A673 (cell line): ENCODE measurements at regions of chr1 and their contacts with region 1.

Region 1: GRCh38 chr1:113140588-113141446 is 67.8 kb downstream of the LRIG2 start:
- DNase-seq: peak; percentile 79
- H3K4me3 ChIP-seq: no peak overlapping the region
- H3K27ac ChIP-seq: peak overlapping the region; percentile 19
- H3K4me1 ChIP-seq: peaks cover 26% of the 10 kb centered on the region
- H3K27me3 ChIP-seq: no peaks in the 10 kb centered on the region
- CTCF ChIP-seq: peak; percentile 94

Region 2: GRCh38 chr1:113185463-113186104 is 44.8 kb after region 1 on chr1:
- CTCF ChIA-PET with region 1: no interaction called
- POLR2A ChIA-PET with region 1: no interaction called
- intact Hi-C with region 1: no loop called
- DNase-seq: no peak
- H3K4me3 ChIP-seq: no peak overlapping the region
- H3K27ac ChIP-seq: no peak overlapping the region
- H3K4me1 ChIP-seq: no peaks in the 10 kb centered on the region
- H3K27me3 ChIP-seq: peaks cover 8% of the 10 kb centered on the region
- CTCF ChIP-seq: no peak

Region 3: DNA sequence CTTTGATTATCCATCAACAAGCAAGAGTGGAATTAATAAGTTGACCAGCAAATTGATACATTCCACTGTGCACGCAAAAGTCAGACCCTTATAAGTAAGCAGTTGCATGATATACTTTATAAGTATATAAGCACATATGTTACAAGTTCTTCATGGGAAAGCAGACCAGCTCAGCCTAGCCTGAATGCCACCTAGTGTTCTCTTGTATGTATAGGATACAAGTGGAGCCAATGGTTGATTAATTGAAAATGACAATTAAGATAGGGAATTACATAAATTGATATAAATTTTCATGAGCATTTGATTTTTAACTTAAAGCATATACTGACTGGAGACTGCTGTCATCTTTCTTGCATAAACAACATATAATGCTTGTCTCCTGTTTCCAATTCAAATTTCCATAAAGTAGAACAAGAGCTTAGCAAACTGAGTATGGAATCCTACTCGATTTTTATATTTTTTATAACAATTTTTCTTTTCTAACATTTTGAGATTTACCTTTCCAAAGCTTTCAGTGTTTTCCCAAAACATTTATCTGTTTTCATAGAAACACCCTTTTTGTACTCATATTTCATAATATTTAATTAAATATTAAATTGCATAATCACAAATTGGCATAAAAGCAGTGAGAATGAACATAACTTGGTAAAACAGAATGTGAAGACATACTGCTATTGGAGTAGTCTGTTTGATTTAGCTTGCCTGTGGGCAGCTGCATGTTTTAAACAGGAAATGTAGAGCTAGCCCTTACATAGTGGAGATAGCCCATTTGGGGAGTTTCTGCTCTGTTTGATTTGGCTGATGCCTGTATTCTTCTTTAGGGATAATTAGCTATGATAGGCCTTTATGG is 312.3 kb after region 1 on chr1:
- CTCF ChIA-PET with region 1: interaction called, 6 read pairs
- POLR2A ChIA-PET with region 1: no interaction called
- intact Hi-C with region 1: loop called (anchors 2 kb)
- DNase-seq: peak; percentile 44
- H3K4me3 ChIP-seq: no peak overlapping the region
- H3K27ac ChIP-seq: no peak overlapping the region
- H3K4me1 ChIP-seq: no peaks in the 10 kb centered on the region
- H3K27me3 ChIP-seq: peaks cover 6% of the 10 kb centered on the region
- CTCF ChIP-seq: peak; percentile 68